CD8-positive, alpha-beta memory T cell (primary cell): ENCODE measurements at regions of chr6 and their contacts with region 1.

Region 1: GRCh38 chr6:26122793-26123674 is 35.8 kb downstream of the HFE start:
- DNase-seq: peak; percentile 79 to 97 (median 95)
- H3K4me3 ChIP-seq: peak overlapping the region; percentile 90
- H3K4me3 Mint-ChIP-seq: peak overlapping the region; percentile 92 to 100 (median 97)
- H3K27ac ChIP-seq: peak overlapping the region; percentile 97
- H3K27ac Mint-ChIP-seq: peak overlapping the region; percentile 95 to 99 (median 98)
- H3K4me1 ChIP-seq: peaks cover 26% of the 10 kb centered on the region
- H3K4me1 Mint-ChIP-seq: peaks cover 30 to 40% (median 38%) of the 10 kb centered on the region in 3 donors
- H3K27me3 ChIP-seq: no peaks in the 10 kb centered on the region
- H3K27me3 Mint-ChIP-seq: peaks cover 0 to 10% of the 10 kb centered on the region in 2 donors

Region 2: DNA sequence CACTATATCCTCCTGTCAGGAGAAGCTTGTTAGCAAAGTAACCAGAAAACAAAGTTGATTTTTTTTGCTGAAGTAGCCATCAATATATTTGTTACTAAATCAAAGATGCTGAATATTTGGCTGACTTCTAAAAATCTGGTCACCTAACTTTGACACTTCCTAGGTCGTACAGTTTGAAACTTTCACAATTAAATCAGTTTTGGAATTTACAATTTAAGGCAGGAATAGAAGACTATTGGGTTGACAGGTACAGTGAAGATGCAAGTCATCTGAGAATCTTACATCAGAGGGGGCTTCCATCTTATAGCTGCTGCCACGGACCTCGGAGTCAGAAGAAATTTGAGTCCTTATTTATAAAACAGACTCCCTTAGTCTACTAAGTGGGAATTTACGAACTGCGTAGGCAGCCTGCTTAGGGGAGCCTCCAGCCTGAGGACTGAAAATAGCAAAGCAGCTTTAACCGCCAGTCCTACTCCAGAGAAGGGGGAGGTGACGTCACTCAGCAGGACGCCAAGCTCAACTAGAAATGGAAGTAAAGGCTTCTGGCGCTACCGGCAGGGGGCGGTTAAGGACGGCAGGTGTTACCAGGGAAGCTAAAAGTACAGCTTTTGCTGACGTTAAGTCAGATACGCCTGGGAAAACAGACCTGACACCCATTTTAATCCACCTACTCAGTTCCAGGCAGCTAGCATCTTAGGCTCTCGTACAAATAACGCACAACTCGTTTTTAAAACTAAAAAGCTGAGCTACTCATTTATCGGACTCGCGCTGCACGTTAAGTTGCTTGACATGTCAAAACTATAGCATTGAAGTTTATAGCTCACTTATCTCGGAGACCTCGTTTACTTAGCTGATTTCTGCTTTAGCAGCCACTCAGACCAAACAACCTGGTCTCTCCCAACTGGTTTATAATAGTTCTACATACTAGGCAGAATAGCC is 96.9 kb before region 1 on chr6:
- CTCF ChIA-PET with region 1: interaction called, 16 read pairs
- POLR2A ChIA-PET with region 1: interaction called, 58 read pairs
- DNase-seq: peak; percentile 86 to 95 (median 94)
- H3K4me3 ChIP-seq: peak overlapping the region; percentile 59
- H3K4me3 Mint-ChIP-seq: peak overlapping the region; percentile 85 to 95 (median 93)
- H3K27ac ChIP-seq: peak overlapping the region; percentile 86
- H3K27ac Mint-ChIP-seq: peak overlapping the region; percentile 93 to 100 (median 98)
- H3K4me1 ChIP-seq: peaks cover 21% of the 10 kb centered on the region
- H3K4me1 Mint-ChIP-seq: peaks cover 30 to 77% (median 55%) of the 10 kb centered on the region in 3 donors
- H3K27me3 ChIP-seq: no peaks in the 10 kb centered on the region
- H3K27me3 Mint-ChIP-seq: peaks cover 0 to 9% of the 10 kb centered on the region in 2 donors

Region 3: DNA sequence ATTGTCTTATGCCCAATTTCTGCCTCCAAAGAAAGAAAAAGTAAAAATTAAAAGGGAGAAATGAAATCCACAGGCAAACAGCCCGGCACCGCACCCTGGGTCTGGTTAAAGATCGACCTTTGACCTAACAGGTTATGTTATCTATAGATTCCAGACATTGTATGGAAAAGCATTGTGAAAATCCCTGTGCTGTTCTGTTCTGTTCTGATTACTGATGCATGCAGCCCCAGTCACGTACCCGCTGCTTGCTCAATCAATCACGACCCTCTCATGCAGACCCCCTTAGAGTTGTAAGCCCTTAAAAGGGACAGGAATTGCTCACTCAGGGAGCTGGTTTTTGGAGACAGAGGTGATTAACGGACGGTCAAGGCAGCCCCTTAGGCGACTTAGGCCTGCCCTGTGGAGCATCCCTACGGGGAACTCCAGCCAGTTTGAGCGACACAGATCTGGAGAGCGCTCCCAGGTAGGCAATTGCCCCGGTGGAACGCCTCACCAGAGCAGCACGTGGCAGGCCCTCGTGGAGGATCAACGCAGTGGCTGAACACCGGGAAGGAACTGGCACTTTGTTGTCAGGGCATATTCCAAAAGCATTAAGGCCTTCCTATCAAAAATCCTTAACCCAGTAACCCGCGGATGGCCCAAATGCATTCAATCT is 47.8 kb before region 1 on chr6:
- CTCF ChIA-PET with region 1: no interaction called
- POLR2A ChIA-PET with region 1: no interaction called
- DNase-seq: no peak
- H3K4me3 ChIP-seq: no peak overlapping the region
- H3K4me3 Mint-ChIP-seq: no peak overlapping the region
- H3K27ac ChIP-seq: no peak overlapping the region
- H3K27ac Mint-ChIP-seq: no peak overlapping the region
- H3K4me1 ChIP-seq: no peaks in the 10 kb centered on the region
- H3K4me1 Mint-ChIP-seq: no peaks in the 10 kb centered on the region
- H3K27me3 ChIP-seq: no peaks in the 10 kb centered on the region
- H3K27me3 Mint-ChIP-seq: peaks cover 4 to 6% of the 10 kb centered on the region in 2 donors

Region 4: GRCh38 chr6:26087284-26088115 is 35.5 kb before region 1 on chr6 and contains the start of gene HFE:
- CTCF ChIA-PET with region 1: no interaction called
- POLR2A ChIA-PET with region 1: interaction called, 21 read pairs
- DNase-seq: peak; percentile 8 to 49 (median 27)
- H3K4me3 ChIP-seq: peak within 1 kb of the TSS; percentile 86
- H3K4me3 Mint-ChIP-seq: peak within 1 kb of the TSS; percentile 88 to 96 (median 91)
- H3K27ac ChIP-seq: peak within 1 kb of the TSS; percentile 70
- H3K27ac Mint-ChIP-seq: peak within 1 kb of the TSS; percentile 78 to 95 (median 89)
- H3K4me1 ChIP-seq: peaks cover 26% of the 10 kb centered on the region
- H3K4me1 Mint-ChIP-seq: peaks cover 31 to 37% (median 36%) of the 10 kb centered on the region in 3 donors
- H3K27me3 ChIP-seq: no peaks in the 10 kb centered on the region
- H3K27me3 Mint-ChIP-seq: no peaks in the 10 kb centered on the region
- total RNA-seq, gene HFE: 0.37 to 1.1 TPM

Region 5: GRCh38 chr6:26183581-26184366 is 60.7 kb after region 1 on chr6:
- CTCF ChIA-PET with region 1: interaction called, 14 read pairs
- POLR2A ChIA-PET with region 1: interaction called, 56 read pairs
- DNase-seq: peak; percentile 31 to 78 (median 72)
- H3K4me3 ChIP-seq: peak overlapping the region; percentile 81
- H3K4me3 Mint-ChIP-seq: peak overlapping the region; percentile 86 to 99 (median 97)
- H3K27ac ChIP-seq: peak overlapping the region; percentile 71
- H3K27ac Mint-ChIP-seq: peak overlapping the region; percentile 71 to 99 (median 96)
- H3K4me1 ChIP-seq: peaks cover 33% of the 10 kb centered on the region
- H3K4me1 Mint-ChIP-seq: peaks cover 41 to 53% (median 44%) of the 10 kb centered on the region in 3 donors
- H3K27me3 ChIP-seq: no peaks in the 10 kb centered on the region
- H3K27me3 Mint-ChIP-seq: no peaks in the 10 kb centered on the region

Region 6: DNA sequence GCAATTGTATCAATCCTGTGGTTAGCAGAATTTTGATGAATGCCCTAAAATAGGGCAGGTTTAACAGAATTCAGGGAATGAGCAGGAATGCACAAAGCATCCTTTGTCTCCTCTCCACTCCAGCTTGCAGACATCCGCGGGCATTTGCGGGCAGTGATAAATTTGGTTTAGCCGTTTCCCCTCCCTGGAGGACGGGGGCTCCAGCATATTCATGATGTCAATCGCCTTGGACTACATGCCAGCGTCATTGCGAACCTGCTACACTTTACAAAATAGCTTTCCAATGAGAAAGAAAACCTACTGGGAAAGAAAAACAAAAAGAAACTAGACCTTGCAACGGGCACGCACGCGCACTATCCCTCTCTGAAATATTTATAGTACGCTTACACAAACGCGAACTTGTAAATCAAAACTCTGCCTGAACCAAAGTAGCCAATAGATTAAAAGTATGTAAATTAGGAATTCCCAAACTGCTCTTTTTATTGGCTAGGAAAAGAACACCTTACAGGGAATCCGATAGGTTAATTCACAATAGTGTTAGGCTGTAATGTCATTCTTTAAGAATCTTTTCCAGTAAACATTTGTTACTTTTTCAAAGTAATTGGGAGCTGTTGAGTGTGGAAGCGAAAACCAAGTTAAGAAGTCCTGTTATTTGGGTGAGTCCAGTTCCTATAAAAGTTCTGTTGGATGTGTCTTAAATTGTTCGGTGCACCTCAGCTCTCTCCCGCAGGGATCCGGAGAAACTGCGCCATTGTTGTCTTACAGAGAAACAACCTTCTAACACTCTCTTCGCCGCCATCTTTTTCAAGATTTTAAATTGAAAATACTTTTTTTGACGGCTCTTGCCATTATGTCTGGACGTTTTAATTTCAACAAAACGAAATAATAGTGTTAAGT is 100.9 kb after region 1 on chr6:
- CTCF ChIA-PET with region 1: no interaction called
- POLR2A ChIA-PET with region 1: interaction called, 14 read pairs
- DNase-seq: peak; percentile 57 to 83 (median 78)
- H3K4me3 ChIP-seq: peak overlapping the region; percentile 87
- H3K4me3 Mint-ChIP-seq: no peak overlapping the region
- H3K27ac ChIP-seq: peak overlapping the region; percentile 72
- H3K27ac Mint-ChIP-seq: no peak overlapping the region
- H3K4me1 ChIP-seq: peaks cover 17% of the 10 kb centered on the region
- H3K4me1 Mint-ChIP-seq: peaks cover under 1 to 7% (median 7%) of the 10 kb centered on the region in 3 donors
- H3K27me3 ChIP-seq: no peaks in the 10 kb centered on the region
- H3K27me3 Mint-ChIP-seq: no peaks in the 10 kb centered on the region

Region 7: DNA sequence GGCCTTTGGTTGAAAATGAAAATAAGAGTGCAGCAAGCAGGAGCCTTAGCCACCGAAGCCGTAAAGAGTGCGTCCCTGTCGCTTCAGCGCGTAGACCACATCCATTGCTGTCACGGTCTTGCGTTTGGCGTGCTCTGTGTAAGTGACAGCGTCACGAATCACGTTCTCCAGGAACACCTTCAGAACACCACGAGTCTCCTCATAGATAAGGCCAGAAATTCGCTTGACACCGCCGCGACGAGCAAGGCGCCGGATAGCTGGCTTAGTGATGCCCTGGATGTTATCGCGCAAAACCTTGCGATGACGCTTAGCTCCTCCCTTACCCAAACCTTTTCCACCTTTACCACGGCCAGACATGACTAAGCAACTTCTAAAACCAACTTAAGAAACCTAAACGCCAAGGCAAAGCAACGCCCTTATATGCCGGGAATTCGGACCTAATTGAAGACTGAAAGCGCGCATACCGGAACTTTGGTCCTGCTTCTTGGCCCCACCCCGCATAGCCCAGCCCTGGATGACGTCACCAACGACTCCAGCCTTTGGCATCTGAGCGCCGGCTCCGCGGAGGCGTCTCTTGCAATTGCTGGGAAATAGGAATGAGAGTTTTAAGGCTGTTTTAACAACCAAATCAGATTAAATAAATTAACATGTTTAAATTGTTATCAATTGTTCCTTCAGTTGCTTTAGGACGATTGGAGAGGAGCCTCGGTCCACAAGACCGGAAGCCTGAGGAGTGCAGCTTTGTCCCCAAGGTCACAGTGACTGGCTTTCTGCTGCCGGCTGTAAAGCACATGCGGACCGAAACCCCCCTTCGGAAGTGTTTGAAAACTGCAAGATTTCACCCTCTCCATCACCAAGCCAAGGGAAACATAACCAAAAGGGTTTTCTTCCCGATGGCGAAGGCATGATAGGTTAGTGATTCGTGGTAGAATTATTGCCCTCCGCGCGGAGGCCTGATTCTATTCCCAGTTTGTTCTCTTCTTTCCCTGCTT is 162.4 kb after region 1 on chr6:
- CTCF ChIA-PET with region 1: interaction called, 5 read pairs
- POLR2A ChIA-PET with region 1: interaction called, 23 read pairs
- DNase-seq: peak; percentile 89 to 98 (median 91)
- H3K4me3 ChIP-seq: peak overlapping the region; percentile 75
- H3K4me3 Mint-ChIP-seq: peak overlapping the region; percentile 83 to 97 (median 89)
- H3K27ac ChIP-seq: peak overlapping the region; percentile 97
- H3K27ac Mint-ChIP-seq: peak overlapping the region; percentile 93 to 98 (median 98)
- H3K4me1 ChIP-seq: peaks cover 15% of the 10 kb centered on the region
- H3K4me1 Mint-ChIP-seq: peaks cover 22 to 29% (median 23%) of the 10 kb centered on the region in 3 donors
- H3K27me3 ChIP-seq: no peaks in the 10 kb centered on the region
- H3K27me3 Mint-ChIP-seq: peaks cover 0 to 20% of the 10 kb centered on the region in 2 donors

Region 8: DNA sequence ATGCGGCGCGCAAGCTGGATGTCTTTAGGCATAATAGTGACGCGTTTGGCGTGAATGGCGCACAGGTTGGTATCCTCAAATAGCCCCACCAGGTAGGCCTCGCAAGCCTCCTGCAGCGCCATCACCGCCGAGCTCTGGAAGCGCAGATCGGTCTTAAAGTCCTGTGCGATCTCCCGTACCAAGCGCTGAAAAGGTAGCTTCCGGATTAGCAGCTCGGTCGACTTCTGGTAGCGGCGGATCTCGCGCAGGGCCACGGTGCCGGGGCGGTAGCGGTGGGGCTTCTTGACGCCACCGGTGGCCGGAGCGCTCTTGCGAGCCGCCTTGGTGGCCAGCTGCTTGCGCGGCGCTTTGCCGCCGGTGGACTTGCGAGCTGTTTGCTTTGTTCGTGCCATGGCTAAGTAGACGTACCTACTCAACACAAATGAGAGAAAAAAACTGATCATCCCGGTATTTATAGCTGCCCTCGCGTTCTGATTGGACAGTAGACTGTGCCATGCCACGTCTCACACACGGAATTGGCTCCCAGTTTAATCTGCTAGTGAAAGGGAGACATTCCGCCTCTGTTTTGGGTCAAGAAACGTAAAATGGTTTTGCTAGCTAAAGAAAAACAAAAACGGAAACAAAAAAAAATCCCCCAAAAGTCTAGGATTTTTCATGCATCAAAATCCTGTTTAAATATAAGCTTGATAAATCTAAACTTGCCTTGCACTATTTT is 1749.0 kb after region 1 on chr6:
- CTCF ChIA-PET with region 1: interaction called, 8 read pairs
- POLR2A ChIA-PET with region 1: interaction called, 16 read pairs
- DNase-seq: peak; percentile 69 to 95 (median 91)
- H3K4me3 ChIP-seq: peak overlapping the region; percentile 71
- H3K4me3 Mint-ChIP-seq: peak overlapping the region; percentile 82 to 95 (median 88)
- H3K27ac ChIP-seq: peak overlapping the region; percentile 71
- H3K27ac Mint-ChIP-seq: peak overlapping the region; percentile 90 to 99 (median 94)
- H3K4me1 ChIP-seq: peaks cover 24% of the 10 kb centered on the region
- H3K4me1 Mint-ChIP-seq: peaks cover 31 to 39% (median 37%) of the 10 kb centered on the region in 3 donors
- H3K27me3 ChIP-seq: no peaks in the 10 kb centered on the region
- H3K27me3 Mint-ChIP-seq: peaks cover 0 to 3% of the 10 kb centered on the region in 2 donors